ENCODE measurements at regions of chr18 and their contacts with region 1.

Region 1: DNA sequence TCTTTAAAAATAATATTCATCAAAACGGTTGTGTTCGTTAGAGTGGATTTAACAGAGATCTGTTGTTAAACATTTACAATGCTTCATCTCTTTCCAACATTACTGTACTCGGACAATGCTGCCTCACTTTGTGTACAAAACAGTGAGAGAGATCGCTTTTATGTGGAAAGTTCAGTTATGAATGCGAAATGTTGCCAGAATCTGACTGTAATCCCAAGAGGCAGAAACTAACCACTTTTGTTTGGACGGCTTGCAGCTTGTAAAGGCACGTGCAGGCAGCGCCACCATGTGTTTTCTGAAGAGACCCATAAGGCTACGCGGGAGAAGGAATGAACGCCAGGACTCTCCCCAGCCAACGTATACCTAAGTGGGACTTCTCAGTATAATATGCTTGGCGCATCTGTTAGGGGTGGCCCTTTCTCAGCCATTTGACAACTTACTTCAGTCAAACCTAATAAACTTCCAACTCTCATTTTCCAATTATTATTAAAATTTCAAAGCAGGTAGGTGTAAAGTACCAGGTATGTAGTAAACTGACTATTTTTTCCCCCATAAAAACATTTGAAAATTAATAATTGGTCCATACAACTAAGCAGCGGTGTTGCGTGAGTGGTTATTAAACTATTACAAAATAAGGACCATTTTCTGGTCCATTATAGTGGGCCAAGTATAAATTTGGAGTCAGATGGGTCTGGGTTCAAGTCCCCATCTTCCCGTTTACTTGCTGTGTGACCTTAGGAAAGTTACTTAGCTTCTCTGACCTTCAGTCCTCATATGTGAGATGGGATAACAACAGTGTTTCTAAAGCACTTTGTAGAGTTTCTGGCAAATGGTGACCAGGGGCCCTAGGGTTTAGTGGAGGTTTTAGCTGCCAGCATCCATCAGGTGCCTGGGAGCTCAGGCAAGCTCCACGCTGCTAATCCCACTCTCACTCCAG is 5.6 kb upstream of the NAPG start:
- DNase-seq: peak; percentile 84
- H3K4me3 Mint-ChIP-seq: no peak overlapping the region
- H3K27ac Mint-ChIP-seq: no peak overlapping the region
- H3K4me1 Mint-ChIP-seq: peaks cover 14% of the 10 kb centered on the region
- H3K27me3 Mint-ChIP-seq: peaks cover 17% of the 10 kb centered on the region

Region 2: GRCh38 chr18:10312326-10313015 is 207.8 kb before region 1 on chr18:
- CTCF ChIA-PET with region 1: no interaction called
- intact Hi-C with region 1: no loop called
- DNase-seq: no peak
- H3K4me3 Mint-ChIP-seq: no peak overlapping the region
- H3K27ac Mint-ChIP-seq: no peak overlapping the region
- H3K4me1 Mint-ChIP-seq: no peaks in the 10 kb centered on the region
- H3K27me3 Mint-ChIP-seq: no peaks in the 10 kb centered on the region

Region 3: DNA sequence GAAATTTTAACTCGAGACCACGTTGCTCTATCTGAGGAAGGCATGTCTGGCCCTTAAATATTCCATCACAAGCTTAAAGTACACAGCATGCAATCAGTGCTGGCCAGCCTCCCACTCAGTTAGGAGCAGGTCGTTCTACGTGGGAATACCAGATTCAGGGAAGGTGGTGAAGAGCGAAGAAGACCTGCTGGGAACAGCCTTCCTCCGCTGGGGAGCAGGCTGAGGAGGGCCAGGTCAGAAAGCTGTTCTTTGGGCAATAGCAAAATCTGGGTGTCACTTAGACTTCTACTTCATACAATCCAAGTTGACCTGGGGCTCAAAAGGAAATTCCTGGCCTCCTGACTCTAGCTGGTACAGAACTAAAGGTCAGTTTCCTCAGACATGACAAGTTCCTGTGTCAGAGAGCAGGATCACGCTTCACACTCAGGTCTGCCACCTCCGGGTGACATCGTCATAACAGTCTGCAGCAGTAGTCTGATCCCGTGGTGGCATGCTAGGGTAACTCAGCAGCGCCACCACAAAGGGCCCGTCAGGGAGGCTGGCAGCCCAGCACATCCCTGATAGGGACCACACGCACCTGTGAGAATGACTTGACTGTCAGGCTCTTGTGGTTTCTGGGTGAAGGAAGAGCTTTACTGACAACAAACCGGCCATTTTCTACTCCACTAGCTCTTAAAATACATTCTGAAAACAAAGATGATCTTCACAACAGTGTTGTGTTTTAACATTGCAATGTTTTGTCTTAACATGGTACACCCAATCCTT is 29.7 kb before region 1 on chr18:
- CTCF ChIA-PET with region 1: interaction called, 6 read pairs
- intact Hi-C with region 1: loop called (anchors 2 kb)
- DNase-seq: peak; percentile 85
- H3K4me3 Mint-ChIP-seq: no peak overlapping the region
- H3K27ac Mint-ChIP-seq: no peak overlapping the region
- H3K4me1 Mint-ChIP-seq: peaks cover 9% of the 10 kb centered on the region
- H3K27me3 Mint-ChIP-seq: no peaks in the 10 kb centered on the region